Mammary epithelial cell (primary cell): ENCODE measurements at regions of chr2 and their contacts with region 1.

Region 1: DNA sequence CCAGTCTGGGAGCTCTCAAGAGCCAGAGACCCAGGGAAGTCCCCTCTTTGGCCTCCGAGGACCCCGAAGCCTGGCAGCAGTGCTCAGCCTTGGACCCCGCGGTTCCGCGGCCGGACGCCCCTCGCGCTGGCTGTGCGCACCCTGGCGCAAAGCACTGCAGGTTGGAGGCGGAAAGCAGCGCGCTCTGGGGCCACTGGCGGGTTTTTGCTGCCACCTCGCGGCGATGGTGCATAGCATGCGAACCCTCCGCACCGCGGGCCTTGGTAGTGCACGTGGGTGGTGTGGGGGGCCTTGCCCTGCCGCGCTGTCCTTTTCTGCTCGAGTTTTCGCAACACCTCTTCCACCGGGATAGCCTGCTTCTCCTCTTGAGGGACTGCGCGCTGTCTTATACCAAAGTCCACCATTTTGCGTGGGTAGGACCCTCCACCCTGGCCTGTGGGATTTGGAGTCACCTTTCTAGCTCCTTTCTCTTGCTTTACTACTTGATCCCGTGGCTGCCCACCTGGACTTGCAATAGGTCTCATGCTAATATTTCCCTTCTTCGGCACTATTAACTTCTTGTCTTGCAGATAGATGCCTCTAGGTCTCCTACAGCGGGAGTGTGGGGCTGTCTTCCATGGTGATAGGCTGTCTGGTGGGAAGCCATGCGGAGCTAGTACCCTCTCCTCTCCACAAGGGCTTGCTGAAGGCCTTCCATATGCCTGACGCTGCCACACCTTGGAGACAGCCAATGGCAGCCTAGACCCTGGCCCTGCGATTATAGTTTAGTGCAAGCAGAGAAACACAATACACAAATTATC is 14.3 kb downstream of the SIX3 start:
- DNase-seq: peak; percentile 54
- H3K4me3 ChIP-seq: peak overlapping the region in 2 of 3 experiments; percentile 25 to 32
- H3K27ac ChIP-seq: no peak overlapping the region
- H3K4me1 ChIP-seq: peaks cover 38% of the 10 kb centered on the region
- H3K27me3 ChIP-seq: peaks cover 25% of the 10 kb centered on the region
- CTCF ChIP-seq: peak; percentile 70 to 91

Region 2: DNA sequence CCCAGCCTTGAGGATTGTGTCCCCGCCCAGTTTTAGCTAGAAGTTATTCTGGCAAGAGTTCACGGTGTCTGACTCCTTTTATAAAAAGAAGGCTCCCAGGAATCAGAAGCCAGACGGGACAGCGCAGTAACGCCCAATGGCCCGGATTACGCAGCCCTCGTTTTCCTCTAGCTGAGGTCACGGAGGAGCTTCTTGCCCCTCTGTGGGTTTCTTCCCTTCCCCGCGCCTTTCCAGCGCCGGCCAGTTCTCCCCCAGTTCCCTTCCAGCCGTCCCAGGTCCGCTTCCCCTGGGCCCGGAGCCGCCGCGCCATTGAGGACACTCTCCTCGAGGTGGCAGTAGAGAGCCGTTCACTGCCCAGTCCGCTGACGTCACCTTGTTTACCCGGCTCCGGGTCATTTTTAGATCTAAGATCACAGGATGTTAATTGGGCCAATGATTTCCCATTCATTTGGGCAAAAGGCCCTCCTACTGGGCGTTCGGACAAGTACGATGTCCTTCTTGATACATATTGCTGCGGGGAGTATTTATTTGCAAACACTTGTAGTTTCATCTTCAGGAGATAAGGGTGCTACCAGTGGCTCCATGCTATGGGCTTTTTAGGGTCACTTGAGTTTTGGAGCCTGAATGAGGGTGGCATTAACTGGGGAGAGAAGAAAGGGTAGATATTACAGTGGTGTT is 868.6 kb before region 1 on chr2:
- CTCF ChIA-PET with region 1: no interaction called
- dilution Hi-C with region 1: no loop called
- in situ Hi-C with region 1: no loop called
- intact Hi-C with region 1: loop called (anchors 1 kb)
- DNase-seq: peak; percentile 56
- H3K4me3 ChIP-seq: peak overlapping the region in 1 of 3 experiments; percentile 16
- H3K27ac ChIP-seq: no peak overlapping the region
- H3K4me1 ChIP-seq: no peaks in the 10 kb centered on the region
- H3K27me3 ChIP-seq: no peaks in the 10 kb centered on the region
- CTCF ChIP-seq: peak; percentile 86 to 94

Region 3: GRCh38 chr2:44237221-44237620 is 718.6 kb before region 1 on chr2:
- CTCF ChIA-PET with region 1: no interaction called
- dilution Hi-C with region 1: no loop called
- in situ Hi-C with region 1: no loop called
- intact Hi-C with region 1: no loop called
- DNase-seq: no peak
- H3K4me3 ChIP-seq: no peak overlapping the region
- H3K27ac ChIP-seq: no peak overlapping the region
- H3K4me1 ChIP-seq: peaks cover 8% of the 10 kb centered on the region
- H3K27me3 ChIP-seq: no peaks in the 10 kb centered on the region
- CTCF ChIP-seq: no peak

Region 4: GRCh38 chr2:44392338-44392943 is 563.4 kb before region 1 on chr2:
- CTCF ChIA-PET with region 1: interaction called, 4 read pairs
- dilution Hi-C with region 1: loop called (anchors 10 kb)
- in situ Hi-C with region 1: no loop called
- intact Hi-C with region 1: loop called (anchors 1 kb)
- DNase-seq: peak; percentile 2
- H3K4me3 ChIP-seq: no peak overlapping the region
- H3K27ac ChIP-seq: no peak overlapping the region
- H3K4me1 ChIP-seq: no peaks in the 10 kb centered on the region
- H3K27me3 ChIP-seq: no peaks in the 10 kb centered on the region
- CTCF ChIP-seq: peak; percentile 58 to 71

Region 5: GRCh38 chr2:44560352-44560751 is 395.4 kb before region 1 on chr2:
- CTCF ChIA-PET with region 1: interaction called, 4 read pairs
- dilution Hi-C with region 1: no loop called
- in situ Hi-C with region 1: no loop called
- intact Hi-C with region 1: loop called (anchors 1 kb)
- DNase-seq: no peak
- H3K4me3 ChIP-seq: no peak overlapping the region
- H3K27ac ChIP-seq: no peak overlapping the region
- H3K4me1 ChIP-seq: peaks cover 2% of the 10 kb centered on the region
- H3K27me3 ChIP-seq: no peaks in the 10 kb centered on the region
- CTCF ChIP-seq: peak; percentile 33 to 64

Region 6: DNA sequence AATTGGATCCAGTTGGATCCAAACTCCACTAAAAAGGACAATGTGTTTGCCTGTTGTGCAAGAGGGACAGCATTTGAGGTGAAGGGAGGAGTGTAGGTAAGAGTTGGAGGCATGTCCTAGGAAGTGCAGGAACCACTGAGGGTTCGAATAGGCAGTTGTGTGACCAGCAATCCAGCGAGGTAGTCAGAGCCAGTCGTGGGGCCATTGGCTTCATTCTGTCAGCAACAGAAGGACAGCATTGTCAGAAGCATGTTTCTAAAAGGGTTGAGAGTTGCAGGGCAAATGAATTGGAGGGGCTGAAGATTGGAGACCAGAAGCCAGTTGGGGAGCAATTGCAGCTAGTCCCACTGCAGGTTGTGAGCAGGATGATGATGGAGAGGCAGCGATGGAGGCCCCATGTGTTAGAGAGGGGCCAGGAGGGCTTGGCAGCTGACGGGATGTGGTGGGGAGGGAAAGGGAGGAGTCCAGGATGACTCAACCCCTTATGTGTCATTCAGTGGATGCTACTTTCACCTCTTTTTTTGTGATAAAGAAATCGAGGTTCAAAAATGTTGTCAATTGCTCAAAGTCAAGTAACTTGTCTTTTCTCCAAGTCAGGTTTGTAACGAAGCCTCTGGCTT is 111.0 kb before region 1 on chr2:
- CTCF ChIA-PET with region 1: no interaction called
- dilution Hi-C with region 1: no loop called
- in situ Hi-C with region 1: no loop called
- intact Hi-C with region 1: no loop called
- DNase-seq: peak; percentile 17
- H3K4me3 ChIP-seq: no peak overlapping the region
- H3K27ac ChIP-seq: no peak overlapping the region
- H3K4me1 ChIP-seq: no peaks in the 10 kb centered on the region
- H3K27me3 ChIP-seq: peaks cover 4% of the 10 kb centered on the region
- CTCF ChIP-seq: no peak

Region 7: GRCh38 chr2:44920751-44921150 is 35.0 kb before region 1 on chr2:
- CTCF ChIA-PET with region 1: no interaction called
- dilution Hi-C with region 1: loop called (anchors 5 kb)
- in situ Hi-C with region 1: no loop called
- intact Hi-C with region 1: no loop called
- DNase-seq: no peak
- H3K4me3 ChIP-seq: no peak overlapping the region
- H3K27ac ChIP-seq: no peak overlapping the region
- H3K4me1 ChIP-seq: peaks cover 3% of the 10 kb centered on the region
- H3K27me3 ChIP-seq: peaks cover 11% of the 10 kb centered on the region
- CTCF ChIP-seq: no peak